ENCODE measurements at regions of chr1 and their contacts with region 1.

Region 1: GRCh38 chr1:11907275-11908094 is 18.7 kb downstream of the KIAA2013 start:
- DNase-seq: peak; percentile 86
- ATAC-seq: peak; percentile 54
- H3K4me3 Mint-ChIP-seq: peak overlapping the region; percentile 85
- H3K27ac Mint-ChIP-seq: peak overlapping the region; percentile 100
- H3K4me1 Mint-ChIP-seq: peaks cover 9% of the 10 kb centered on the region
- H3K27me3 Mint-ChIP-seq: no peaks in the 10 kb centered on the region; the same call in 1 of the 2 replicates
- CTCF ChIP-seq: no peak

Region 2: DNA sequence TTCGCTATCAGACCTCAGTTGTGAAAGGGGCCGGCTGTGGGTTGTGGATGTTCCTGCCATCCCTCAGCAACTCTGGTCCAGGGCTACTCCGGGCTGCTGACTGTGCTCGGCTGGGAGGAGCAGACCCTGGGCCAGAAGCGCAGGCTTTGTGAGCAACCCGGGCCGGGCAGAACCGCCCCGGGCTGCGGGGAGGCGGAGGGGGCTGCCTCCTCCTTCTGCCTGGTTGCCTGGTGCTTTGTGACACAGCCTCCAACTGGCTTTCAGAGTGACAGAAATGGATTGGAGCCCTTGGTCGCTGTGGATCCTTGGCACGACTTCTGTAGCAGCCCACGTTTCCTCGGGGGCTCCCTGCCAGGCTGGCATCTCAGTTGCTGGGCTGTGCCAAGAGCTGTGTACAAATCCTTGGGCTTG is 205.9 kb before region 1 on chr1:
- CTCF ChIA-PET with region 1: no interaction called
- POLR2A ChIA-PET with region 1: no interaction called
- DNase-seq: no peak
- ATAC-seq: no peak
- H3K4me3 Mint-ChIP-seq: no peak overlapping the region
- H3K27ac Mint-ChIP-seq: no peak overlapping the region
- H3K4me1 Mint-ChIP-seq: peaks cover 51% of the 10 kb centered on the region
- H3K27me3 Mint-ChIP-seq: no peaks in the 10 kb centered on the region
- CTCF ChIP-seq: no peak

Region 3: GRCh38 chr1:11925938-11926292 is 18.4 kb after region 1 on chr1:
- CTCF ChIA-PET with region 1: interaction called, 4 read pairs
- POLR2A ChIA-PET with region 1: interaction called, 27 read pairs
- DNase-seq: peak; percentile 25
- ATAC-seq: peak; percentile 28
- H3K4me3 Mint-ChIP-seq: no peak overlapping the region
- H3K27ac Mint-ChIP-seq: no peak overlapping the region
- H3K4me1 Mint-ChIP-seq: peaks cover 26% of the 10 kb centered on the region
- H3K27me3 Mint-ChIP-seq: no peaks in the 10 kb centered on the region
- CTCF ChIP-seq: no peak

Region 4: GRCh38 chr1:11934302-11935056 is 27.0 kb after region 1 on chr1 and contains the start of gene PLOD1:
- CTCF ChIA-PET with region 1: no interaction called
- POLR2A ChIA-PET with region 1: interaction called, 27 read pairs
- DNase-seq: peak; percentile 76
- ATAC-seq: peak; percentile 89
- H3K4me3 Mint-ChIP-seq: peak within 1 kb of the TSS; percentile 70
- H3K27ac Mint-ChIP-seq: peak within 1 kb of the TSS; percentile 91
- H3K4me1 Mint-ChIP-seq: peaks cover 24% of the 10 kb centered on the region
- H3K27me3 Mint-ChIP-seq: no peaks in the 10 kb centered on the region
- CTCF ChIP-seq: no peak
- total RNA-seq, gene PLOD1: 46.9 to 73.8 TPM (median 67.3 TPM) in 3 replicates

Region 5: GRCh38 chr1:11940260-11940921 is 32.9 kb after region 1 on chr1:
- CTCF ChIA-PET with region 1: interaction called, 11 read pairs
- POLR2A ChIA-PET with region 1: interaction called, 38 read pairs
- DNase-seq: no peak
- ATAC-seq: no peak
- H3K4me3 Mint-ChIP-seq: no peak overlapping the region
- H3K27ac Mint-ChIP-seq: no peak overlapping the region
- H3K4me1 Mint-ChIP-seq: peaks cover 32% of the 10 kb centered on the region
- H3K27me3 Mint-ChIP-seq: no peaks in the 10 kb centered on the region; the same call in 1 of the 2 replicates
- CTCF ChIP-seq: no peak

Region 6: DNA sequence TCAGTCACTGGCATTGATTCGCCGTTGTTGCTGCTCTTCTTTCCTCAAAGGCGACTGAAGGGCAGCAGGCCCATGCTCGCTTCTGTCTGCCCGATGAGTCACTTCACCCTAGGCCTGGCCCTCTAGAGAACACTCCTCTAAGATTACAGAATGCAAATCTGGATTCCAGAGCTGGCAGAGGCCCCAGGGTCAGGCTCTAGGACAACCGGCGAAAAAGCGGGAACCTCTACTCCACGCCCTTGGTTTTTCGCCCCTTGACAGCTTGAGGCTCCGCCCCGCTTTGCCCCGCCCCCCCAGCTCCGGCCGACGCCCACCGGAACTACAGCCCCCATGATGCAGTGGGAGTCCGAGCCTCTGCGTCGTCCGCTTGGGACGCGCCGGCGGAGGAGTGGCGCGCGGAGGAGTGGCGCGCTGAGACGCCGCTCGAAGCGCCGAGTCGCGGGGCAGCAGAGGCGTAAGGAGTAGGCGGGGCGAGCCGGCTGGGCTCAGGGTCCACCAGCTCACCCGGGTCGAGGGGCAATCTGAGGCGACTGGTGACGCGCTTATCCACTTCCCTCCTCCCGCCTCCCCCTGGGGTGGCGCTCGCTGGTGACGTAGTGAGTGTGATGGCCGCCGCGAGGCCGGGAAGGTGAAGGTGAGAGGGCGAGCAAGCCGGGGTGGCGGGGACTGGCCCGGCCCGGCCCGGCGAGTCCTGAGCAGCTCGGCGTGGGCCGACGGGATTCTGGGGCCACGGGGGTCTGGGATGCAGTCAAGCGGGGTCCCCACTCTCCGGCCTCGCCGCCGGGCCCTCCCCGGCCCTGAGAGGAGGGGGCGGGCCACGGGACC is 72.6 kb after region 1 on chr1 and contains the start of gene MFN2:
- CTCF ChIA-PET with region 1: interaction called, 3 read pairs
- POLR2A ChIA-PET with region 1: interaction called, 31 read pairs
- DNase-seq: peak; percentile 99
- ATAC-seq: peak; percentile 97
- H3K4me3 Mint-ChIP-seq: peak within 1 kb of the TSS; percentile 98
- H3K27ac Mint-ChIP-seq: peak within 1 kb of the TSS; percentile 99
- H3K4me1 Mint-ChIP-seq: peaks cover 21% of the 10 kb centered on the region
- H3K27me3 Mint-ChIP-seq: no peaks in the 10 kb centered on the region
- CTCF ChIP-seq: no peak
- total RNA-seq, gene MFN2: 56.8 to 63.0 TPM (median 59.8 TPM) in 3 replicates

Region 7: GRCh38 chr1:12019858-12020509 is 112.5 kb after region 1 on chr1:
- CTCF ChIA-PET with region 1: no interaction called
- POLR2A ChIA-PET with region 1: interaction called, 29 read pairs
- DNase-seq: no peak
- ATAC-seq: no peak
- H3K4me3 Mint-ChIP-seq: peak overlapping the region; percentile 88
- H3K27ac Mint-ChIP-seq: peak overlapping the region; percentile 79
- H3K4me1 Mint-ChIP-seq: peaks cover 4% of the 10 kb centered on the region
- H3K27me3 Mint-ChIP-seq: no peaks in the 10 kb centered on the region; the same call in 1 of the 2 replicates
- CTCF ChIP-seq: no peak

Region 8: DNA sequence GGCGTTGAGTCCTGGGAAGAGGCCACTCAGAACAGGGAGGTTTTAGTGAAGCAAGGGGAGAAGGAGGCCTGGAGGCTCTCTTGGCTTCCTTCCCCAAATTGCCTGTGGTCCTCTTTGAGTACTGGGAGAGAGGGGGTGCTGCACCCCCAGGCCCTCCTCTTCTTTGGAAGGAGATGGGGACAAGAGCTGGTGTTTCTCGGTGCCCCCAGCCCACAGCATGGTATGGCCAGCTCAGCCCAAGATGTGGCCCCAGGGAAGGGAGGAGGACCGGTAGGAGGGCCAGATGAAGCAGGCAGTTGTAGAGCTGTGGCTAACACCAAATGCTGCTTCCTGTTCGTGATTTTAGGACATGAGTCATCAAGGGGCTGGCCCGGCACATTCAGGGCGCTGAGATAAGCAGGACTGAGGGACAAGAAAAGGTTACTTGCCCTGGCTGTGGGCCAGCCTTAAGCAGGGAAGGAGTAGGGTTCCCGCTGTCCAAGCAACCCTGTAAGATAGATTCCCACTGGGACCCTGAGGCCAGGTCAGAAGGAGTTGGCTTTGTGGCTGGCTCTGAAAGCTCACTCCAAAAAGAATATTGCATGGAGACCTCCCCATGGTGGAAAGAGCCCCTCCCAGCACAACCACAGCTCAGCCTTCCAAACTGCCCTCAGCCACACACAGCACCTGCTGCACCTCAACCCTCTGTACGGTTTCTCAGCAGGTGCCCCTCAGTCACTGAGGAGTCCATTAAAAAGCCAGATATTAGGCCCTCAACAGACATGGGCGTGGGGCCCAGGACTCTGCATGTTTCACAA is 254.4 kb after region 1 on chr1:
- CTCF ChIA-PET with region 1: no interaction called
- POLR2A ChIA-PET with region 1: no interaction called
- DNase-seq: no peak
- ATAC-seq: no peak; the same call in 1 of the 2 replicates
- H3K4me3 Mint-ChIP-seq: no peak overlapping the region
- H3K27ac Mint-ChIP-seq: no peak overlapping the region
- H3K4me1 Mint-ChIP-seq: peaks cover 21% of the 10 kb centered on the region
- H3K27me3 Mint-ChIP-seq: peaks cover 24% of the 10 kb centered on the region
- CTCF ChIP-seq: no peak